SK-N-SH (cell line): ENCODE measurements at regions of chr9 and their contacts with region 1.

Region 1: DNA sequence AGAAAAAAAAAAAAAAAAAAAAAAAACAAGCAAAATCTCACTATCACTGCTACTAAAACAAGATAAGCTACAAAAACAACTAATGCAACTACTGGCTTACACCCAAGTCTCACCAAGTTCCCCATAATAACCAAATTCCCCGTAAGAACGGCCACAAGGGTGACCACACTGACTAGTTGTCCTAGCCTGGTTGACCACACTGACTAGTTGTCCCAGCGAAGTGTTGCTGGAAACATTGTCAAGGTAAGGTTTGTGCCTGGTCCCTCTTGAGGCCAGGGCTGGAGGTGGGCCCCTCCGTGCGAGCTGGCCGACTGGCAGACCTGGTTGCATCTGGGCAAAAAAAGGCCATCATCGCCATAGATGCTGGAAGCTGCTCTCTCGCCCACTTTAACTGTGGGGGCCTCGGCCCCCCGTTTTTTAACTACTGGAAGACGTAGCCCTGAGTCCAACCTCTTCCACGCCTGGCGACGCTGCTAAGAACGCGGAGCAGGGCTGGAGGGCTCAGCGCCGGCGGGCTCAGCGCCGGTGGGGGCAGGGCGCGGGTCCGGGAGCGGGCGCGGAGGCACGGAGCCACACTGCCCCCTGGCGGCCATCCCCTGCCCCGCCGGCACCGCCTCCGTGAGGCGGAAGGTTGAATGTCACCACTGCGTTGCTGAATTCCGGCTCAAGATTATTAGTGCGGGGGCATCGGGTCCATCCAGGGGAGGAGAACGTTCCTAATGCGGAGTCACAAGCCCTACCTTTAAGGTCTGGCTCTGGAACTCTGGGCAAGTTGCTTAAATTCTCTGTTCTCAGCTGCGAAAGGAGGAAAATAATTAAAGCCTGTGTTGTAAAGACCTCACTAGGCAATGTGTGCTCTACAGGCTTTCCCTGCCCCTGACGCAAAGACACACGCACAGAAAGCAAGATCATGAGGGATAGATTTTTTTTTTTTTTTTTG is 84.0 kb downstream of the HSD17B3 start:
- DNase-seq: peak; percentile 93
- H3K4me3 ChIP-seq: peak overlapping the region; percentile 39 to 54
- H3K27ac ChIP-seq: peak overlapping the region in 1 of 2 experiments; percentile 94; a peak in 2 of 4 replicates
- H3K4me1 ChIP-seq: peaks cover 0 to 38% of the 10 kb centered on the region in 2 experiments; a peak in 2 of 4 replicates
- H3K27me3 ChIP-seq: peaks cover 9% of the 10 kb centered on the region; the same call in 1 of the 2 replicates
- CTCF ChIP-seq: peak; percentile 90
- EP300 ChIP-seq: no peak
- RAD21 ChIP-seq: peak; percentile 86

Region 2: DNA sequence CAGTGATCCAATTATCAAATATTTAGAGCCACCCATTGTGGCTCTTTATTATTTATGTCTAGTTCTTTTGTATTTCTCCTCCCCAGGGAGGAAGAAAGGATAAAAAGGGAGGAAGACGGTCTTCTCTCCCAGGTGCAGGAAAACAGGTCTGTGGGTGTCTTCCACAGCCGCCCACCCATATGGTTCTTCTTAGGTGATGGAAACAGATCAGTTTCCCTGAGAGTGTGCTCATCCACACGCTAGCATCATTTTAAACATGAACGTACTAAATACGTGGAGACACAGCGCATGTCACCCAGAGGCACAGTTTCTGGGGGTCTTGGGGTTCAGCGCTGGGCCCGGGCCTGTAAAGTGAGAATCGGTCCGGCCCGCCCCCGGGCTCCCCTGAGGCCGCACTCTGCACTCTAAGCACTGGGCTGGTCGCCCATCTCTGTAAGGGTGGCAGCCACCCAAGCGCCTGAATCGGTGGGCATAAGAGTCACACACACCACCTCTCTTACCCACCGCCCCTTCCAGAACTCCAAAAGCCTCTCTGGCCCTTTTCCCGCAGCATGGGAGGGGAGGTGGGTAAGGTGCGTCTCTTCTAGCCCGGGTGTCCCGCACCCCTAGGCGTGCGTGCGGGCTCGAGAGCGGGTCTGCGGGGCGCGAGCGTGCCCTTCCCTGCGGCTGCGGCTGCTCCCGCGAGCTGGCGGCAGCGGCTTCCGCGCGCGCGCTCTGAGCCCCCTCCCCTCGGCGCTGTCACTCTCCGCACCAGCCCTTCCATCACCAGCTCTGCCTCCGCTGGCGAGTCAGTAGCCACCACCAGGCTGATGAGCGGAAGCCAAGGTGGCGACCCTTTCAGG is 702.5 kb before region 1 on chr9:
- CTCF ChIA-PET with region 1: interaction called, 11 read pairs
- POLR2A ChIA-PET with region 1: interaction called, 6 read pairs
- DNase-seq: peak; percentile 82
- H3K4me3 ChIP-seq: peak overlapping the region; percentile 54 to 63; a peak in 3 of 4 replicates
- H3K27ac ChIP-seq: peak overlapping the region in 1 of 2 experiments; percentile 39; a peak in 1 of 4 replicates
- H3K4me1 ChIP-seq: peaks cover 11 to 25% of the 10 kb centered on the region in 2 experiments; a peak in 3 of 4 replicates
- H3K27me3 ChIP-seq: 0 out of 2 replicates have a peak, but pooled peaks cover 7% of the 10 kb centered on the region
- CTCF ChIP-seq: no peak
- EP300 ChIP-seq: no peak
- RAD21 ChIP-seq: no peak

Region 3: GRCh38 chr9:95875305-95876137 is 342.5 kb before region 1 on chr9 and contains the start of gene ERCC6L2:
- CTCF ChIA-PET with region 1: interaction called, 15 read pairs
- POLR2A ChIA-PET with region 1: interaction called, 8 read pairs
- DNase-seq: peak; percentile 92
- H3K4me3 ChIP-seq: no peak within 1 kb of the TSS
- H3K27ac ChIP-seq: no peak within 1 kb of the TSS; a peak in 1 of 4 replicates
- H3K4me1 ChIP-seq: peaks cover 6 to 8% of the 10 kb centered on the region in 2 experiments; a peak in 3 of 4 replicates
- H3K27me3 ChIP-seq: no peaks in the 10 kb centered on the region
- CTCF ChIP-seq: no peak
- EP300 ChIP-seq: no peak
- RAD21 ChIP-seq: peak; percentile 32
- polyA plus RNA-seq, gene ERCC6L2: 10.0 and 13.8 TPM in 2 replicates

Region 4: DNA sequence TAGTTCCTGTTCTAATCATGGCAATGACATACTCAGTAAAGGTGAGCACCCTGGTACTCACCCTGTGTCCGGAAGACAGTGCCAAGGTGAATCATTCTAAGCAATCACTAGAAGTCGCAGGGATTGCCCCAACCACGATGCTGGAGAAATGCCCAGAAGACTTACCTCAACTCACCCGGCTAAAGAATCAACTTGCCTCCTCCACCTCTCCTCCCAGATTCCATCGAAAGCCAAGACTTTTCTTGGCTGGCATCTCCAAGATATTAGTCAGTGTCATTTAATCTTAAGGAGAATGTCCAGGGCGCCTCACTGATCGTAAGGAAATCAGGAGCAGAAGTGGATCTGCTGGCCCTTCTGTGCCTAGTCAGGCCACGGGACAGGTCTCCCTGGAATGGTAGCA is 137.7 kb before region 1 on chr9:
- CTCF ChIA-PET with region 1: interaction called, 20 read pairs
- POLR2A ChIA-PET with region 1: interaction called, 7 read pairs
- DNase-seq: no peak
- H3K4me3 ChIP-seq: no peak overlapping the region
- H3K27ac ChIP-seq: no peak overlapping the region
- H3K4me1 ChIP-seq: peaks cover 0 to 29% of the 10 kb centered on the region in 2 experiments; a peak in 2 of 4 replicates
- H3K27me3 ChIP-seq: no peaks in the 10 kb centered on the region; the same call in 1 of the 2 replicates
- CTCF ChIP-seq: no peak
- EP300 ChIP-seq: no peak
- RAD21 ChIP-seq: no peak

Region 5: GRCh38 chr9:96177005-96177718 is 40.9 kb before region 1 on chr9:
- CTCF ChIA-PET with region 1: interaction called, 18 read pairs
- POLR2A ChIA-PET with region 1: no interaction called
- DNase-seq: peak; percentile 68
- H3K4me3 ChIP-seq: no peak overlapping the region
- H3K27ac ChIP-seq: no peak overlapping the region
- H3K4me1 ChIP-seq: no peaks in the 10 kb centered on the region; a peak in 1 of 4 replicates
- H3K27me3 ChIP-seq: no peaks in the 10 kb centered on the region
- CTCF ChIP-seq: no peak
- EP300 ChIP-seq: no peak
- RAD21 ChIP-seq: peak; percentile 53

Region 6: GRCh38 chr9:96203867-96204501 is 14.0 kb before region 1 on chr9:
- CTCF ChIA-PET with region 1: interaction called, 33 read pairs
- POLR2A ChIA-PET with region 1: interaction called, 5 read pairs
- DNase-seq: peak; percentile 89
- H3K4me3 ChIP-seq: no peak overlapping the region; a peak in 1 of 4 replicates
- H3K27ac ChIP-seq: peak overlapping the region in 1 of 2 experiments; percentile 72; a peak in 2 of 4 replicates
- H3K4me1 ChIP-seq: peaks cover 0 to 18% of the 10 kb centered on the region in 2 experiments; a peak in 1 of 4 replicates
- H3K27me3 ChIP-seq: peaks cover 16% of the 10 kb centered on the region
- CTCF ChIP-seq: no peak
- EP300 ChIP-seq: 0 out of 4 replicates have a peak, but pooled peaks of 1 of the 2 experiments have one; percentile 78
- RAD21 ChIP-seq: no peak

Region 7: DNA sequence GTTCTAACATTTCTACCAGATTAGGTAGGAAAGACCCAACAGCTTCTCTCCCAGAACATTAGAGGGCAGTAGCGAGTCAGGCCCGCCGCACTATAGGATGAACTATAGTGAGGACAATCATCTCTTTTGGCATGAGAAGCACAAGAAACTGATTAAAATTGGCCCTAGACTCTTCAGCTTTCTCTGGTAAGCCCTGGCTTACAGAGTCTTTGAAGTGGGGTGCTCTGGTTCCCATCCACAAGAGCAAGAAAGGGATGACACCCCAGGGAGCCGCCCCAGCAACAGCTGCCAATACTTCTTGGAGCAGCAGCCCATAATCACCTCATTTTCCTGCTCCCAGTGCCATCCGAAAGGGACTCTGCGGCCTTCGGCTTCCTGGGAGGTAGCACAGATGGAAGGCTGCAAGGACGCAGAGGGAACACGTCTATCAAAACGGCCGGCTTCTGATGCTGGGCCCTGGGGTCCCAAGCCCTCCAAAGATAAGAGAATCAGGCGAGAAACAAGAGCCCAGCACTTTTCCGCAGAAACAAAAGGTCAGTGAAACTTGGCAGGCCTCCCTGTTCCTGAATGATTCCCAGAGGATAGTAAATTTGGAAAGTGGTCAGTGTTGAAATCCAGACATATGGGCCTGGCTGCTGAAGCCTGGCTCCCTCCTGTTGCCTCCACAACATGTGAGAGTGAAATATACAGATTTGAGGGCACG is 14.7 kb after region 1 on chr9:
- CTCF ChIA-PET with region 1: interaction called, 14 read pairs
- POLR2A ChIA-PET with region 1: no interaction called
- DNase-seq: peak; percentile 70
- H3K4me3 ChIP-seq: no peak overlapping the region; a peak in 1 of 4 replicates
- H3K27ac ChIP-seq: no peak overlapping the region
- H3K4me1 ChIP-seq: no peaks in the 10 kb centered on the region
- H3K27me3 ChIP-seq: no peaks in the 10 kb centered on the region
- CTCF ChIP-seq: peak; percentile 93
- EP300 ChIP-seq: no peak
- RAD21 ChIP-seq: peak; percentile 75